ENCODE measurements at regions of chr5 and their contacts with region 1.

Region 1: GRCh38 chr5:77775790-77776553 is at the start of gene TBCA:
- DNase-seq: peak; percentile 93
- H3K4me3 ChIP-seq: peak within 1 kb of the TSS; percentile 68 to 85 (median 80)
- H3K27ac ChIP-seq: peak within 1 kb of the TSS; percentile 93 to 96 (median 96)
- H3K4me1 ChIP-seq: peaks cover 33 to 49% (median 49%) of the 10 kb centered on the region in 4 donors
- H3K27me3 ChIP-seq: no peaks in the 10 kb centered on the region
- CTCF ChIP-seq: peak in 1 of 3 experiments; percentile 34
- EP300 ChIP-seq: no peak
- POLR2A ChIP-seq: peak; percentile 65
- total RNA-seq, gene TBCA: 128 to 152 (median 146) TPM

Region 2: GRCh38 chr5:77761606-77762005 is 14.4 kb before region 1 on chr5:
- intact Hi-C with region 1: no loop called
- DNase-seq: no peak
- H3K4me3 ChIP-seq: no peak overlapping the region
- H3K27ac ChIP-seq: no peak overlapping the region
- H3K4me1 ChIP-seq: peaks cover 6 to 16% (median 9%) of the 10 kb centered on the region in 4 donors
- H3K27me3 ChIP-seq: no peaks in the 10 kb centered on the region
- CTCF ChIP-seq: no peak
- EP300 ChIP-seq: no peak
- POLR2A ChIP-seq: no peak

Region 3: DNA sequence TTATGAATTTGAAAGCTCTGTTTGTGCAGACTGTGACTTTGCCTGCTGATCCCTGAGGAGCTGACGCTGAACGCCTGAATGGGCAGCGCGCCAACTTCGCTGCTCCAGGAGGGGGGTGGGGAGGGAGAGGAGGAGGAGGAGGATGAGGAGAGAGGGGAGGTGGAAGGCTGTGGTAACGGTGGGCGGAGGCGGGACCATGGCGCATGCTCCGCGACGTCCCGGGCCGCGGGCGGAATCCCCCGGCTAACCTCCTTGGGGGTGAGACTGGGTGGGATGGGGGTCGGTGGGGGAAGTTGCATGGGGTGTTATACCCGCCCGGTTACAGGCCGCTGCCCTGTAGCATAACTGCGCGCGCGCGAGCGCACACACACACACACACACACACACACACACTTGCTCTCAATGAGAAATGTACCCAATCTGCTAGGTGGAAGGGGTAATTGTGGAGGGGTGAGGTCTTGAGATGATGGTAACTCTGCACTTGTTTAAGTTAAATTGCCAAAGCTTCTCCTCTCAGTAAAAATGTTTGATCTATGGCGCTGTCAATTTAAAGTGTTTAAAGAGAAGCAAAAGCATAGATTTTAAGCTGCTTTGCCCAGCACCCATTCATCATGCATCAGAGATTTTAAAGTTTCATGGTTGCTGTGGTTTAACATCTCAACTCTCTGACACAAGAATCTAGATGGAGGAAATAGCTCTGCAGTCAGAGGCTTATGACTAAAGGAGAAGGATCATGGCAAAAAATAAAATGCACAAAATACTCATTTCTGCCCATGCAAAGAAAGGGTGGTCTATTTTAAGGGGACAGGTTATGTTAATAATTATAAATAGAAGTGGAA is 76.8 kb after region 1 on chr5:
- intact Hi-C with region 1: loop called (anchors 5 kb)
- DNase-seq: peak; percentile 82
- H3K4me3 ChIP-seq: peak overlapping the region; percentile 63 to 71 (median 68)
- H3K27ac ChIP-seq: no peak overlapping the region
- H3K4me1 ChIP-seq: peaks cover 6 to 25% (median 21%) of the 10 kb centered on the region in 4 donors
- H3K27me3 ChIP-seq: peaks cover 0 to 3% (median 0%) of the 10 kb centered on the region in 4 donors
- CTCF ChIP-seq: no peak
- EP300 ChIP-seq: no peak
- POLR2A ChIP-seq: no peak